ENCODE measurements at regions of chr11 and their contacts with region 1.

Region 1: DNA sequence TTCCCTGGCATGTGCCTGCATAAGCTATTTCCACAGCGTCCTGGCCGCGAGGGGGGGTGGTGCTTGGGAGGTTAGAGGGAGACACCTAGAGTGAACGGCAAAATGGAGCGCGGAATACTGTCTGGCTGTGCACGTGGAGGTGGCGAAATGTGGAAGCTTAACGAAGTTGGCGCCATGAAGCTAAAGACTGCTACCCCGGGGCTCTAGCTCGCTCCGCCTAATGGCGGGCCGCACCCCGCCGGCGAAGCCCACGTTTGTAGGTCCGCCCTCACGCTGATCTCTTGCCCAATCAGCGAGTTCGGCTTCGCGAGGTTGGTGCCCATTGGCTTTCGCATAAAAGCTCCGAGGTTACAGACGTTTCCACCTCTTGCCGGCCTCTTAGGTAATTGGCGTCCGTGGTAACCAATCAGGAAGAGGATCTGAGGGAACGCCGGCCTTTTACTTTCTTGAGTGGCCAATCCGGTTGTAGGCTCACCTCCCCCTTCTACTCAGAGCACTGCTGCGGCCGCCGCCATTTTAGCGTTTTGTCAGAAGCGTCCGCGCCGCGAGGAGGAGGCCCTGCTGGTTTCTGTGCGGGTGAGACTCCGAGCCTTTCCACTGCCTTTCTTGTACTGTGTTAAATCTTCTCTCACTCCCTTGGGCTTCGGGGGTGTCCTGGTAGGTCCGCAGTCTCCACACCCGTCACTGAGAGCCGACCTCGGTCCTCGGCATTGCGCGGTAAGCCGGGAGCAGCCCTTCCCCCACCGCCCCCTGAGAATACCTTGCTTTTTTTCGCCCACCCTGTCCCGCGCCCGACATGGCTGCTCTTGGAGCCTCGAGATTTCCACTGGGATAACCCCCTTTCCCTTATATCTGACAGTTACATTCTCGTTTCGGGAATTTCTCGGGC is at the start of gene RBM4:
- DNase-seq: peak; percentile 99
- ATAC-seq: peak; percentile 92
- H3K4me3 ChIP-seq: peak within 1 kb of the TSS; percentile 79 to 95 (median 88)
- H3K4me3 Mint-ChIP-seq: peak within 1 kb of the TSS; percentile 99
- H3K27ac ChIP-seq: peak within 1 kb of the TSS; percentile 77 to 87
- H3K27ac Mint-ChIP-seq: peak within 1 kb of the TSS; percentile 96
- H3K4me1 ChIP-seq: peaks cover 49 to 54% of the 10 kb centered on the region in 2 donors
- H3K4me1 Mint-ChIP-seq: peaks cover 63% of the 10 kb centered on the region
- H3K27me3 ChIP-seq: no peaks in the 10 kb centered on the region
- H3K27me3 Mint-ChIP-seq: no peaks in the 10 kb centered on the region
- CTCF ChIP-seq: peak; percentile 10
- total RNA-seq, gene RBM4: 199 and 203 TPM in 2 replicates

Region 2: DNA sequence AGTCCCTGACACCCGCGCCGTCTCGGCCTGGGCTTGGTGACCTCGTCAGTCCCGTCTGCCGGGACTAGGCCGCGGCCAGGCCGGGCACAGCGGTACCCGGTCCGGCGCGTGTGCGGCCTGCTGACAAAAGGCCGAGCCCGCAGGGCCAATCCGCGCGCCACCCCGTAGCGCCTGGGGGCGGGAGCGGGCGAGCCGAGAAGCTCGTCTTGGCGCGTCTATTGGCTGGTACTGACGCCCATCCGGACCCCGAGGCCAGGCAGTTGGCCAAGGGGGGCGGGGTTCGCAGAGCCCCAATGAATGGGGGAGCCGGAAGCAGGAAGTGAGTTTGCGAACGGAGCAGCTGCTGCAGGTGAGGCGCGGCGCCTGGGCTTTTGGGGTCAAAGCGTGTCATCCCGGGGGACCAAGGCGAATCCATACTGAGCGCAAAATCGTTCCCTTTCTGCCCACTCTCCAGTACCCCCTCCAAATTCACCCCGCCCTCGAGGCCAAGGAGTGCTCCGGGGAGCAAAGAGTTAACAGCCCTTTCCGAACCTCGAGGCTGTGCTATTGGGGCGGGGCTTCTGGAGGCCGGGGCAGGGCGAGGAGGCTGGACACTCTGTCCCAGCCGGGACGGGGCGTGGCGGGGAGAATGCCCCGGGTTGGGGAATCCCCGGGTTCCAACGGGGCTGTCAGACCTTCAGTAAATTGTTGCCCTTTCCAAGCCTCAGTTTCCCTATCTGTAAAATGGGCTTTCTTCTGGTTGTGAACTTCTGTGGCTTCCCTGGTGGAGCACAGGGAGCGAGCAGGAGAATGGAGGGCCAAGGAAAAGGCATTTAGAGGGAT is 158.1 kb before region 1 on chr11 and contains the start of gene DPP3:
- CTCF ChIA-PET with region 1: interaction called, 3 read pairs
- POLR2A ChIA-PET with region 1: interaction called, 4 read pairs
- intact Hi-C with region 1: loop called (anchors 1 kb)
- DNase-seq: peak; percentile 96
- ATAC-seq: peak; percentile 97
- H3K4me3 ChIP-seq: peak within 1 kb of the TSS; percentile 36 to 92 (median 71)
- H3K4me3 Mint-ChIP-seq: peak within 1 kb of the TSS; percentile 92
- H3K27ac ChIP-seq: peak within 1 kb of the TSS; percentile 63 to 85
- H3K27ac Mint-ChIP-seq: peak within 1 kb of the TSS; percentile 93
- H3K4me1 ChIP-seq: peaks cover 10 to 20% of the 10 kb centered on the region in 2 donors
- H3K4me1 Mint-ChIP-seq: peaks cover 20% of the 10 kb centered on the region
- H3K27me3 ChIP-seq: no peaks in the 10 kb centered on the region
- H3K27me3 Mint-ChIP-seq: no peaks in the 10 kb centered on the region
- CTCF ChIP-seq: no peak
- total RNA-seq, gene DPP3: 21.5 and 22.7 TPM in 2 replicates

Region 3: DNA sequence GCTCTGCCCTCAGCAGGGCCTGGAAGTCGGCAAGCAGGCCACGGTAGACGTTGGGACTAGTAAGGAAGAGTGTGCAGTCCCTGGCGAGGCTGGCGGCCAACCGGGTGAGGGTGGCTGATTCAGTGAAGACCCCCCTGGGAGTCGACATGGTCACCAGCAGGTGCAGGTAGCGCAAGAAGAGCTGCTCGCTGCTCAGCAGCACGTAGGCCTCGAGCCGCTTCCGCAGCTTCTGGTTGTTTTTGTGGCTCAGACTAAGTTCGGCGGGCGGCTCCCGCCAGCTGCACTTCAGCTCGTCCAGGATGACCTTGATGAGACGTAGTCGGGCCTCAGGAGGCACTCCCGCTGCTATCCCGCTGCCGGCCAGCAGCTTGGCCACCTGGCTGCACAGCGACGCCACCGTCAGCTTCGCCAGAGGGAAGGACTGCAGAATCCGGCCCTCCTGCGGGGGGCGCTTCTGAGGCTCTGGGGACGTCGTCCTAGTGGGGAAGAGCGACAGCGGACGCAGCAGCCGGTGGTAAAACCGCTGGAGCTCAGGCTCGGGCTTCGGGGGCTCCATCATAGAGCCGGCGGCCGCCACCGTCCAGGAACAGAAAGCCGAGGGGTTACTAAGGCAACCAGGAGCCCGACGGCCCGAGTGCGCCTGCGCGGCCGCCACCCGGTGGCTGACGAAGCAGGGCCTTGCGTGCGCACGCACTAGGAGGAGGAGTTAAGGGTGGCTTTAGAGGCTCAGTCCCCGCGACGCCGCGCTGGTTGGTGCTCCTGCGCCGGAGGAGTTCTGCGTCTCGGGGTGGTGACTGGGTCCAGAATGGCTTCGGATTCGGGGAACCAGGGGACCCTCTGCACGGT is 45.7 kb before region 1 on chr11 and contains the starts of genes CCDC87 and CCS:
- CTCF ChIA-PET with region 1: interaction called, 14 read pairs
- POLR2A ChIA-PET with region 1: interaction called, 5 read pairs
- intact Hi-C with region 1: loop called (anchors 1 kb)
- DNase-seq: peak; percentile 96
- ATAC-seq: peak; percentile 95
- H3K4me3 ChIP-seq: peak within 1 kb of the TSS; percentile 63 to 84 (median 77)
- H3K4me3 Mint-ChIP-seq: peak within 1 kb of the TSS; percentile 100
- H3K27ac ChIP-seq: peak within 1 kb of the TSS; percentile 61 to 86
- H3K27ac Mint-ChIP-seq: peak within 1 kb of the TSS; percentile 99
- H3K4me1 ChIP-seq: peaks cover 28 to 29% of the 10 kb centered on the region in 2 donors
- H3K4me1 Mint-ChIP-seq: peaks cover 40% of the 10 kb centered on the region
- H3K27me3 ChIP-seq: no peaks in the 10 kb centered on the region
- H3K27me3 Mint-ChIP-seq: no peaks in the 10 kb centered on the region
- CTCF ChIP-seq: peak; percentile 77
- total RNA-seq, gene CCDC87: 0.17 and 0.39 TPM in 2 replicates
- total RNA-seq, gene CCS: 87.8 and 98.5 TPM in 2 replicates

Region 4: GRCh38 chr11:66607126-66607834 is 31.1 kb before region 1 on chr11:
- CTCF ChIA-PET with region 1: interaction called, 15 read pairs
- POLR2A ChIA-PET with region 1: interaction called, 10 read pairs
- intact Hi-C with region 1: no loop called
- DNase-seq: no peak
- ATAC-seq: no peak
- H3K4me3 ChIP-seq: no peak overlapping the region
- H3K4me3 Mint-ChIP-seq: no peak overlapping the region
- H3K27ac ChIP-seq: peak overlapping the region; percentile 9 to 56
- H3K27ac Mint-ChIP-seq: peak overlapping the region; percentile 76
- H3K4me1 ChIP-seq: peaks cover 41 to 56% of the 10 kb centered on the region in 2 donors
- H3K4me1 Mint-ChIP-seq: peaks cover 41% of the 10 kb centered on the region
- H3K27me3 ChIP-seq: no peaks in the 10 kb centered on the region
- H3K27me3 Mint-ChIP-seq: no peaks in the 10 kb centered on the region
- CTCF ChIP-seq: no peak

Region 5: DNA sequence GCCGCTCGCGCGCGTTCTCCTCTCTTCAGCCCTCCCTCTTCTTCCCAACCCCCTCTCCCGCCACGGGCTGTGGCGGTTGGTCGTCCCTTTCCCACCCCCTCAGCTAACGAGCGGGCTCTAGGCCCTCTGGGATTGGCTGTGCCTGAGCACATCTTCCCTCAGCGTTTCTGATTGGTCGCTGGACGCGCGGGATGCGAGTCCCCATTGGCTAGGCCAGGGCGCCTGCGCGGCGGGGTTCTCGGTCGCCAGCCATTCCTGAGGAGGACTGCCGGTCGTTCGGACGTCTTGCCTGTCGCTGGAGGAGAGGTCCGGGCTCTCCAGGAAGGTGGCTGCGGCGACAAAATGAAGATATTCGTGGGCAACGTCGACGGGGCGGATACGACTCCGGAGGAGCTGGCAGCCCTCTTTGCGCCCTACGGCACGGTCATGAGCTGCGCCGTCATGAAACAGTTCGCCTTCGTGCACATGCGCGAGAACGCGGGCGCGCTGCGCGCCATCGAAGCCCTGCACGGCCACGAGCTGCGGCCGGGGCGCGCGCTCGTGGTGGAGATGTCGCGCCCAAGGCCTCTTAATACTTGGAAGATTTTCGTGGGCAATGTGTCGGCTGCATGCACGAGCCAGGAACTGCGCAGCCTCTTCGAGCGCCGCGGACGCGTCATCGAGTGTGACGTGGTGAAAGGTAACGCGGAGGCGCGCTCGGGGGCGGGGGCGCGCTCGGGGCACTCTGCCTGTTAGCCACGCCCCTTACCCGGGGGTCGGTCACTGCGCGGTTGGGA is 21.9 kb before region 1 on chr11 and contains the start of gene RBM14:
- CTCF ChIA-PET with region 1: interaction called, 27 read pairs
- POLR2A ChIA-PET with region 1: interaction called, 53 read pairs
- intact Hi-C with region 1: loop called (anchors 1 kb)
- DNase-seq: peak; percentile 99
- ATAC-seq: peak; percentile 89
- H3K4me3 ChIP-seq: peak within 1 kb of the TSS; percentile 75 to 97 (median 94)
- H3K4me3 Mint-ChIP-seq: peak within 1 kb of the TSS; percentile 99
- H3K27ac ChIP-seq: peak within 1 kb of the TSS; percentile 85 to 90
- H3K27ac Mint-ChIP-seq: peak within 1 kb of the TSS; percentile 99
- H3K4me1 ChIP-seq: peaks cover 53 to 65% of the 10 kb centered on the region in 2 donors
- H3K4me1 Mint-ChIP-seq: peaks cover 59% of the 10 kb centered on the region
- H3K27me3 ChIP-seq: no peaks in the 10 kb centered on the region
- H3K27me3 Mint-ChIP-seq: no peaks in the 10 kb centered on the region
- CTCF ChIP-seq: no peak
- total RNA-seq, gene RBM14: 244 and 246 TPM in 2 replicates

Region 6: DNA sequence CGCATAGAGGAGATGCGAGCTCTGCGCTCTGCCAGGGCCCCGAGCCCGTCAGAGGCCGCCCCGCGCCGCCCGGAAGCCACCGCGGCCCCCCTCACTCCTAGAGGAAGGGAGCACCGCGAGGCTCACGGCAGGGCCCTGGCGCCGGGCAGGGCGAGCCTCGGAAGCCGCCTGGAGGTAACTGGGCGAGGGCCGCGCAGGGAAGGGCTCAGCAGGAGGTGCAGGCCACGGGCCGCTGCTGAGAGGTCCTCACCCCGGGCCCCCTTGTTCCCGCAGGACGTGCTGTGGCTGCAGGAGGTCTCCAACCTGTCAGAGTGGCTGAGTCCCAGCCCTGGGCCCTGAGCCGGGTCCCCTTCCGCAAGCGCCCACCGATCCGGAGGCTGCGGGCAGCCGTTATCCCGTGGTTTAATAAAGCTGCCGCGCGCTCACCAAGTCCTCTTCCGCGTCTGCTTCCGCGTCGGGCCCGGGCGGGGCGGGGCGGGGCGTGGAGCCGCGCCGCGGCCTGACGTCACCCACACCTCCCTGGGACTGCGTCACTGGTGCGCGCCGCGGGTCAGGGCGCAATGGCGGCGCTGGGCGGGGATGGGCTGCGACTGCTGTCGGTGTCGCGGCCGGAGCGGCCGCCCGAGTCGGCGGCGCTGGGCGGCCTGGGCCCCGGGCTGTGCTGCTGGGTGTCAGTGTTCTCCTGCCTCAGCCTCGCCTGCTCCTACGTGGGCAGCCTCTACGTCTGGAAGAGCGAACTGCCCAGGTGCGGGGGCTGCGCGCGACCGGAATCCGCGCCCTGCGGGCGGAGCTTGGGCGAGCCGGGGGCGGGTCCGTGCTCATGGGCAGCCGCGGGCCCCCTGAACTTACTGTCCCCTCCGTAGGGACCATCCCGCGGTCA is 204.7 kb after region 1 on chr11 and contains the start of gene RCE1:
- CTCF ChIA-PET with region 1: no interaction called
- POLR2A ChIA-PET with region 1: interaction called, 3 read pairs
- intact Hi-C with region 1: loop called (anchors 1 kb)
- DNase-seq: peak; percentile 96
- ATAC-seq: peak; percentile 91
- H3K4me3 ChIP-seq: peak within 1 kb of the TSS; percentile 74 to 100 (median 95)
- H3K4me3 Mint-ChIP-seq: peak within 1 kb of the TSS; percentile 90
- H3K27ac ChIP-seq: peak within 1 kb of the TSS; percentile 98 to 99
- H3K27ac Mint-ChIP-seq: peak within 1 kb of the TSS; percentile 94
- H3K4me1 ChIP-seq: peaks cover 28 to 37% of the 10 kb centered on the region in 2 donors
- H3K4me1 Mint-ChIP-seq: peaks cover 43% of the 10 kb centered on the region
- H3K27me3 ChIP-seq: no peaks in the 10 kb centered on the region
- H3K27me3 Mint-ChIP-seq: no peaks in the 10 kb centered on the region
- CTCF ChIP-seq: no peak
- total RNA-seq, gene RCE1: 31.6 and 34.3 TPM in 2 replicates

Region 7: GRCh38 chr11:67288452-67289225 is 650.2 kb after region 1 on chr11:
- CTCF ChIA-PET with region 1: no interaction called
- POLR2A ChIA-PET with region 1: no interaction called
- intact Hi-C with region 1: no loop called
- DNase-seq: peak; percentile 95
- ATAC-seq: peak; percentile 76
- H3K4me3 ChIP-seq: peak overlapping the region; percentile 31 to 86 (median 79)
- H3K4me3 Mint-ChIP-seq: peak overlapping the region; percentile 76
- H3K27ac ChIP-seq: peak overlapping the region; percentile 86 to 92
- H3K27ac Mint-ChIP-seq: peak overlapping the region; percentile 97
- H3K4me1 ChIP-seq: peaks cover 44 to 55% of the 10 kb centered on the region in 2 donors
- H3K4me1 Mint-ChIP-seq: peaks cover 45% of the 10 kb centered on the region
- H3K27me3 ChIP-seq: no peaks in the 10 kb centered on the region
- H3K27me3 Mint-ChIP-seq: no peaks in the 10 kb centered on the region
- CTCF ChIP-seq: peak; percentile 61